Calu3 (cell line): ENCODE measurements at regions of chr16 and their contacts with region 1.

Region 1: DNA sequence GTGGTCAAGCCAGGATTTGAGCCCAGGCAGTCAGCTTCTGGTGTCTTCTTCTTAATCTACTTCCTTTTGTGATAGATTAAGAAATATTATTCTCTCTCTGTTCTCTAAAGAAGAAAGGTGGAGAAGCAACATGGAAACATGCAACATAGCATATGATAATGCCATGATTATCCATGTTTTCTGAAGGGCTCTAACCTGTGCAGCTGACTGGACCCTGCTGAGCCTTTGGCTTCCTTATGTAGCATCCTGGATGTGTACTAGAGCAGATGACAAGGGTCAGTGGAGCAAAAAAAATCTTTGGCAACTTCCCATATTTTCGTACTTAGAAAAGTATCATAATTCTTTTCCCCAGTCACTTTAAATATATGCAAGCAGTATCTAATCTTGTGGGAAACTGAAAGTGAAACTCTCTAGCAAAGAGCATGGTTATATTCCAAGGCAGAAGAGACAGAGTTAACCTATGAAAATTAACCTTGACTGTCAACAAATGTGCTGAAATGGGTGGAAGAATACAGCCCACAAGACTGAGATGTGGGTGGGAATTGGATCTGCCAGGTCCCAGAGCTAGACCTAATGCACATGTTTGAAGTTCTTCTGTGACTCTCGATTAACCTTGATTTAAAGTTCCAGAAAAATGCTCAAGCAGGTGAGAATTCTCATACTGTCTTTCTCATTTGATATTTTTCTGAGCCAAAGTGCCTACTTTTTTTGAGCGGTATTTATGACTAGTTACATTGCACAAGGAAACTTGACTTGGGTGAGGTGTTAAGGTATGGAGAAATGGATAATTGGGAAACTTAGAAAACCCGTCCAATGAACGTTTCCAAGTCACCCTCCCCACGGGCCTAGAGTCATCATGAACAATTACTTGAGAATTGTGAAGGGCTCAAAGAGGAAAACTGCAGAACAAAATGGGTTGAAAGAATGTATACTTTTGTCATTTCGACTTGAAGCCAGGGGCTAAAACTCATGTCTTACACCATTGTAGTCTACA is 248.6 kb downstream of the FTO start:
- DNase-seq: no peak
- H3K4me3 Mint-ChIP-seq: no peak overlapping the region
- H3K27ac Mint-ChIP-seq: no peak overlapping the region
- H3K4me1 Mint-ChIP-seq: no peaks in the 10 kb centered on the region
- H3K27me3 Mint-ChIP-seq: no peaks in the 10 kb centered on the region
- CTCF ChIP-seq: no peak

Region 2: DNA sequence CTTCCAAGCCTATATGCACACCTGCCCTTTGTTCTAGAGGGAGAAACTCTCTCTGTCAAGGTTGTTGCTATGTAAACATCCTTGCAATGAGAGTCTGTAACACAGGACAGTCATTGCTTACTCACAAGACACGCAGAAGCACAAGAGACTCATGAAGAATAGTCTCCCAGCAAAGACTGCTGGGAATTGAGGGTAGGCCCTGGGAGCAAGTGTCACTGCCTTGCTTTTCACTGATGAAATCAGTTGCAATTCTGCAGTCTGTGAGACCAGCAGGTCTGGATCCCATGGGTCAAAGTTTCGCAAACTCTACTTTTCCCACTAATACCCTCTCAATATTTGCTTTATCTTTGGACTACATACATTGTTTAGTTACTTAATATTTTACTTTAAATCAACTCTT is 71.1 kb before region 1 on chr16:
- CTCF ChIA-PET with region 1: no interaction called
- intact Hi-C with region 1: no loop called
- DNase-seq: no peak
- H3K4me3 Mint-ChIP-seq: no peak overlapping the region
- H3K27ac Mint-ChIP-seq: peak overlapping the region; percentile 47
- H3K4me1 Mint-ChIP-seq: no peaks in the 10 kb centered on the region
- H3K27me3 Mint-ChIP-seq: no peaks in the 10 kb centered on the region
- CTCF ChIP-seq: no peak

Region 3: DNA sequence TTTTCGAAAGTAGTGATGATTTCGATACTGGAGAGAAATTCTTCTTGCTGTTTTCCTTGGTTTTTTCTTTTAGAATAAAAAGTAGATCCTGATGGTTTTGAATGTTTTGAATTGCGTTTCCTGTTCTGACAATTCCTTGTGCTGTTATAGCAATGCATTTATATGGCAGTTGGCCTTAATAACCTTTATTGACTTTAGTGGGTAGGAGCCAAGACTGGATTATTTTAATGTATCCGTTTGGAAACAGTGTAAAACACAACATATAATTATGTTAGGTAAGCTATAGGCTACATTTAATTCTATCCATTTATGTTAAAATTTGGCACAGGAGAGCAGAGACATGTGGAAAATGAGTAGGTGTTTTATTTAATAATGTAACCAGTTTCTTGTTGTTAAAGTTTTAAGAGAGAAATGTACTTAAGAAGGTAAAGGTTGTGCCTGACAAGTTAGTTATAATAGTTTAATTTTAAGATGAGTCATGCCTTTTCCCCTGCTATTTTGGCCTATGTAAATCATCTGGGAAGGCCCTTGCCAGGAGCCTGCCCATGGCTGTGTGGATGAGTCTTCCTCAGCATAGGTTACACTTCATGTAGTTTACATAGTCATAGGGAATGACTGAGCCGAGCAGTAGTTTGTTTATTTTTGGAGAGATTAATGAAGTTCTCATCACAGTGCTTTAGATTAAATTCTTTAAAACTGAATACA is 58.6 kb before region 1 on chr16:
- CTCF ChIA-PET with region 1: no interaction called
- intact Hi-C with region 1: no loop called
- DNase-seq: peak; percentile 12
- H3K4me3 Mint-ChIP-seq: no peak overlapping the region
- H3K27ac Mint-ChIP-seq: no peak overlapping the region
- H3K4me1 Mint-ChIP-seq: peaks cover 11% of the 10 kb centered on the region
- H3K27me3 Mint-ChIP-seq: no peaks in the 10 kb centered on the region
- CTCF ChIP-seq: no peak

Region 4: DNA sequence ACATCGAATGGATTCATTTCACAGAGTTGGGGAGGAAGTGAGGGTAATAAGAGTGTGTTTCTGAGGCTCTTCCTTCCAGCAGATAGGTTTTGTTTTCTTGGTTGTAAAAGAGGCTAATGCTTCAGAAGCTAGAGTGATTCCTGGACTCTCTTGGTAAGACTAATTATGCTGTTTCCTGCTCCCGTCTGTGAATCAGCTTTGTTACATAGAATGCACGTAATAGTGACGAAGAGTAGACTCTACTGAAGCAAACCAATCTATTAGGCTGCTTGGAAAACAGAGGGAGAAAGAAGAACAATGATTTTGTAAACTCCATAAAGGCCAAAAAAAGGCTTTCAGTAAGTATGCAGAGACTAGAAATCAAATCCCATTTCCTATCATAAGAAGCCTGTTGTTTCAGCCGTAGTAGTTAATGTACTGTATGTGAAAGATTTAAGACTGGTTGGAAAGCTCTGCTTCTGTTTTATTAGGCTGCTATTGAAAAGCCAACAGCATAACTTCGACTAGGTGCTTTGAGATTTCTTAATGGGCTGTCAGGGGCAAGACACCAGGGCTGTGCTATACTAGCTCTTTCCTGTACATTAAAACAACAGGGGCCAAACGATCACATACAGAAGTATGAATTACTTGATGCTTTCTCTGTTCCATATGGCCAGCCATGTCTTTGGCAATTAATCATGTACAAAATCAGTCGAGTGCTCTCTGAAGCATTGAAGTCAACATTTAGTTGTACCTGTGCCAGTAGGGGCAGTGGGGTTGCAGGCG is 29.5 kb before region 1 on chr16:
- CTCF ChIA-PET with region 1: no interaction called
- intact Hi-C with region 1: no loop called
- DNase-seq: no peak
- H3K4me3 Mint-ChIP-seq: no peak overlapping the region
- H3K27ac Mint-ChIP-seq: no peak overlapping the region
- H3K4me1 Mint-ChIP-seq: no peaks in the 10 kb centered on the region
- H3K27me3 Mint-ChIP-seq: no peaks in the 10 kb centered on the region
- CTCF ChIP-seq: no peak

Region 5: DNA sequence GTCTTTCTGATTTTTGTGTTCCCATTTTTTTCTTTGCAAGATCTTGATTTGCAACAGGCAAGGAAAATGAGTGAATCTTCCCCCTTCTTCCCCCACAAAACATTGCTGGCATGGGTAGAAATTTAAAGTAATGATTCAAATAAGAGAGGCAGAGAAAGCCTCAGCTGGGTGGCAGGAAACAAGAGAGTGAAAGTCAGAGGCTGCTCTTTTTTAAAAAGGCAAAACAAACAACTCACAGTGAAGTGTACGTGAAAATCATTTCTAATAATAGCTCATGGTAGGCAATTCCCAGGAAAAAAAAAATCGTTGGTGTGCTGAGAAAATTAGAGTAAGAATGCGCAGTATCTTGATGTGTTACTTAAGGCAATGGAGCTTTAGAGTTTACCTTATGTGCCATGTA is 19.1 kb before region 1 on chr16:
- CTCF ChIA-PET with region 1: no interaction called
- intact Hi-C with region 1: loop called (anchors 1 kb)
- DNase-seq: no peak
- H3K4me3 Mint-ChIP-seq: no peak overlapping the region
- H3K27ac Mint-ChIP-seq: no peak overlapping the region
- H3K4me1 Mint-ChIP-seq: no peaks in the 10 kb centered on the region
- H3K27me3 Mint-ChIP-seq: no peaks in the 10 kb centered on the region
- CTCF ChIP-seq: no peak